ENCODE measurements at regions of chr3 and their contacts with region 1.

Region 1: GRCh38 chr3:149480325-149481017 is 6.0 kb downstream of the TM4SF4 start:
- DNase-seq: peak; percentile 87 to 88
- H3K4me3 ChIP-seq: no peak overlapping the region
- H3K4me3 Mint-ChIP-seq: no peak overlapping the region
- H3K27ac Mint-ChIP-seq: no peak overlapping the region
- H3K4me1 ChIP-seq: peaks cover 9% of the 10 kb centered on the region
- H3K4me1 Mint-ChIP-seq: peaks cover 7% of the 10 kb centered on the region
- H3K27me3 ChIP-seq: no peaks in the 10 kb centered on the region
- H3K27me3 Mint-ChIP-seq: no peaks in the 10 kb centered on the region
- CTCF ChIP-seq: peak; percentile 86 to 88

Region 2: GRCh38 chr3:149120051-149120972 is 360.2 kb before region 1 on chr3:
- CTCF ChIA-PET with region 1: no interaction called
- POLR2A ChIA-PET with region 1: no interaction called
- intact Hi-C with region 1: loop called (anchors 5 kb)
- DNase-seq: peak in 1 of 2 experiments; percentile 51
- H3K4me3 ChIP-seq: no peak overlapping the region
- H3K4me3 Mint-ChIP-seq: no peak overlapping the region
- H3K27ac Mint-ChIP-seq: no peak overlapping the region
- H3K4me1 ChIP-seq: peaks cover 4% of the 10 kb centered on the region; the same call in 1 of the 2 replicates
- H3K4me1 Mint-ChIP-seq: peaks cover 14% of the 10 kb centered on the region
- H3K27me3 ChIP-seq: no peaks in the 10 kb centered on the region
- H3K27me3 Mint-ChIP-seq: no peaks in the 10 kb centered on the region
- CTCF ChIP-seq: peak; percentile 42 to 64

Region 3: GRCh38 chr3:149288655-149289054 is 191.8 kb before region 1 on chr3:
- CTCF ChIA-PET with region 1: no interaction called
- POLR2A ChIA-PET with region 1: no interaction called
- intact Hi-C with region 1: loop called (anchors 5 kb)
- DNase-seq: no peak
- H3K4me3 ChIP-seq: no peak overlapping the region
- H3K4me3 Mint-ChIP-seq: no peak overlapping the region
- H3K27ac Mint-ChIP-seq: no peak overlapping the region
- H3K4me1 ChIP-seq: peaks cover 7% of the 10 kb centered on the region; the same call in 1 of the 2 replicates
- H3K4me1 Mint-ChIP-seq: no peaks in the 10 kb centered on the region
- H3K27me3 ChIP-seq: no peaks in the 10 kb centered on the region
- H3K27me3 Mint-ChIP-seq: no peaks in the 10 kb centered on the region
- CTCF ChIP-seq: no peak

Region 4: GRCh38 chr3:149352556-149352955 is 127.9 kb before region 1 on chr3:
- CTCF ChIA-PET with region 1: interaction called, 4 read pairs
- POLR2A ChIA-PET with region 1: no interaction called
- intact Hi-C with region 1: loop called (anchors 1 kb)
- DNase-seq: peak; percentile 74 to 76
- H3K4me3 ChIP-seq: no peak overlapping the region
- H3K4me3 Mint-ChIP-seq: no peak overlapping the region
- H3K27ac Mint-ChIP-seq: no peak overlapping the region
- H3K4me1 ChIP-seq: peaks cover 22% of the 10 kb centered on the region
- H3K4me1 Mint-ChIP-seq: peaks cover 29% of the 10 kb centered on the region
- H3K27me3 ChIP-seq: no peaks in the 10 kb centered on the region
- H3K27me3 Mint-ChIP-seq: no peaks in the 10 kb centered on the region
- CTCF ChIP-seq: peak; percentile 72 to 73

Region 5: DNA sequence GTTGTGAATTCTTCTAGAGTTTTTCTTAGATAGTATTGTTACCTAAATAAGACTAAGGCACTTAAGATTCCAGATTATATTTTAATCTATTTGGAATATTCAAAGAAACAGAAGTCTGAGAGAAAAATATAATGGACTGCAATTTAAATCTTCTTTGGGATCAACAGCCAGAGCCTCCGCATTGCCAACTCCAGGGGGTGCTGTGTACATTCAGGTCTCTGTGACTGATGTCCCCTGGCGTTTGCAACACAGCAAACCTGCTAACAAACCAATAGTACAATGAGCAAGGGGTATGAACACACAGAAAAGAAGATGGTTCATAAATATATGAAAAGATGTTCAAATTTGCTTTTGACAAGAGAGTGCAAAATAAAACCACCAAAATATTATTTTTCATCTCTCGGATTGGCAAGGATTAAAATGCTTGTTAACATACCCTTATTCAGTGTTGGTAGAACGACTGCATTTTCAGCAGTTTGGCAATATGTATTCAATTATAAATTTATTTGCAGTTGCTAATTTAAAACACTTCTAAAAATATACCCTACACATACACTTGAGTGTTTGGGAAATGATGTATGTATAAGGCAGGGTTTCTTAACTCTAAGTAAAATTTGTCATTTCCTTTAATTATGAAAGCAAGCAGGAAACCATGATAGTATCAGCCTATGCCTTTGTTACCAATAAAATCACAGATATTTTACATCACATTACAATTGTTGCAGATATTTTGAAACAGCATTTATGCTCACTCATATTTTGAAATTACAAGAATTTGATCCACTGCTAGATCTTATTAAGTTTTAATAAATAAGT is 86.9 kb before region 1 on chr3:
- CTCF ChIA-PET with region 1: no interaction called
- POLR2A ChIA-PET with region 1: no interaction called
- intact Hi-C with region 1: loop called (anchors 1 kb)
- DNase-seq: peak; percentile 76 to 82
- H3K4me3 ChIP-seq: no peak overlapping the region
- H3K4me3 Mint-ChIP-seq: no peak overlapping the region
- H3K27ac Mint-ChIP-seq: no peak overlapping the region
- H3K4me1 ChIP-seq: peaks cover 17% of the 10 kb centered on the region
- H3K4me1 Mint-ChIP-seq: peaks cover 29% of the 10 kb centered on the region
- H3K27me3 ChIP-seq: no peaks in the 10 kb centered on the region
- H3K27me3 Mint-ChIP-seq: no peaks in the 10 kb centered on the region
- CTCF ChIP-seq: peak; percentile 90 to 97

Region 6: DNA sequence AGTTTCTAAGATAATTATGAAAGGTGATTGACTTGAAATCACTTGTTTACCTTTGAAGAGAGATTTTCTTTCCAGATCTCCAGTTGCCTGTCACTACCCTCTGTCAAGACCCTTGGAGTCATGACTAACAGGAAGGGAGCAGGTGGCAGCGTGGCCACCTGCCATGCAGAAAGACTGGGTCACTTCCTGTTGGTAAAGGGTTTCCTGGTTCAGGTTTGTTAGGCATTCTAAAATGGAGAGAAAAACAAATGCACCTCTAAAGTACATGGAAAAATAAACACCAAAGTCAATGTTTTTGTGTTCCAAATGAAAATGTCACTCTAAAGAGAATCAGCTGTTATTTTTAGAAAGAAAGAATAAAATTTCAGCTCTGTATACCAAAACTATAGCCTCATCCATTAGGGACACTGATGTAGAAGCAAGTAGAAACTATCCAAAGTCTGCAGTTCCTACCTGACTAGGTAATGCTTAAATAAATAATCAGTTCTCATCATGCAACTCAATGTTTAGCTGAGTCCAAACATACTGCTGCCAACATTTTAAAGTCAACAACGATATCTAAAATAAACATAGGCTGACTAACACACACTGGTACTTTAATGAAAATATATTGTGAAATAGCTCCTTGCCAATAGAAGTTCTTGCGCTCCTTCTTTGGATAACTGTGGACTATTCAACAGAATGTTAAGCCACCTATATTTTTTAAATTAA is 79.1 kb before region 1 on chr3:
- CTCF ChIA-PET with region 1: interaction called, 4 read pairs
- POLR2A ChIA-PET with region 1: no interaction called
- intact Hi-C with region 1: loop called (anchors 1 kb)
- DNase-seq: peak; percentile 50 to 53
- H3K4me3 ChIP-seq: no peak overlapping the region; the same call in 1 of the 2 replicates
- H3K4me3 Mint-ChIP-seq: peak overlapping the region; percentile 6
- H3K27ac Mint-ChIP-seq: peak overlapping the region; percentile 78
- H3K4me1 ChIP-seq: peaks cover 33% of the 10 kb centered on the region
- H3K4me1 Mint-ChIP-seq: peaks cover 19% of the 10 kb centered on the region
- H3K27me3 ChIP-seq: no peaks in the 10 kb centered on the region
- H3K27me3 Mint-ChIP-seq: no peaks in the 10 kb centered on the region
- CTCF ChIP-seq: no peak